ENCODE measurements at regions of chr5 and their contacts with region 1.

Region 1: GRCh38 chr5:77086689-77087483 is at the start of gene ZBED3:
- DNase-seq: peak; percentile 45 to 94 (median 68)

Region 2: DNA sequence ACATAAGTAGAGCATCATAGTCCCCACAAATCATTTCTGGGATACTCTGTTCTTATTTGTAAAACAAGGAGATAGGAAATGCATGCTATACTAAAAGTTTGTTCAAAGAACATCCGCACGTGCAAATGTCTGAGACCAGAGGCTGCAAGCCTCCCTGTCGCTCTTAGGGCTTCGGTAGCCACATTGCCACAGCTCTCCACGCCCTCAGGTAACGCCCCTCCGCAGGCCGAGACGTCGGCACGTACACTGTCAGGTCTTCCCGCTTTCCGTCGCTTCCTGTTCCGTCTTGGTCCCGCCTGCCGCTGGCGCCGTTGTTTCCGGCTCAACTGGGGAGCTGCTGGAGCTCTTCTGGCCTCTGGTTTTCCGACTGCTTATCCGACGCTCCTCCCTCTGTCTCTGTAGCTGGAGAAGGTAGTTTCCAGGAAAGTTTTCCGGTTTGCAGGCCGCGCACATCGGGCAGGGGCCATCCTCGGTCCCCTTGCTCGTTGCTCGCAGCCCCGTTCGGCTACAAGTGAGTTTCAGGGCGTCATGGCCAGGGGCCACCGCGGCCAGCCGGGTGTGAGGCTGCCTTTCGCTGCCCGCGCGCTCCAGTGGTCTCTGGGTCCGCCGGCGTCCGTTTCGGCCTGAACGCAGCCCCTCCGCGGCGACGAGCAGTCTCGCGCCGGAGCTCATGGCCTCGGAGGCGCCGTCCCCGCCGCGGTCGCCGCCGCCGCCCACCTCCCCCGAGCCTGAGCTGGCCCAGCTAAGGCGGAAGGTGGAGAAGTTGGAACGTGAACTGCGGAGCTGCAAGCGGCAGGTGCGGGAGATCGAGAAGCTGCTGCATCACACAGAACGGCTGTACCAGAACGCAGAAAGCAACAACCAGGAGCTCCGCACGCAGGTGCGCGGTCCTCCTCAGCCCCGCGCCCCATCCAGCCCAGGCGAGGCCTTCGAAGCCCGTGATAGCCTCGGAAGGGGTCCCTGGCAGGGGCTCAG is 56.5 kb before region 1 on chr5 and contains the start of gene AGGF1:
- intact Hi-C with region 1: loop called (anchors 5 kb)
- DNase-seq: peak; percentile 88 to 99 (median 94)

Region 3: DNA sequence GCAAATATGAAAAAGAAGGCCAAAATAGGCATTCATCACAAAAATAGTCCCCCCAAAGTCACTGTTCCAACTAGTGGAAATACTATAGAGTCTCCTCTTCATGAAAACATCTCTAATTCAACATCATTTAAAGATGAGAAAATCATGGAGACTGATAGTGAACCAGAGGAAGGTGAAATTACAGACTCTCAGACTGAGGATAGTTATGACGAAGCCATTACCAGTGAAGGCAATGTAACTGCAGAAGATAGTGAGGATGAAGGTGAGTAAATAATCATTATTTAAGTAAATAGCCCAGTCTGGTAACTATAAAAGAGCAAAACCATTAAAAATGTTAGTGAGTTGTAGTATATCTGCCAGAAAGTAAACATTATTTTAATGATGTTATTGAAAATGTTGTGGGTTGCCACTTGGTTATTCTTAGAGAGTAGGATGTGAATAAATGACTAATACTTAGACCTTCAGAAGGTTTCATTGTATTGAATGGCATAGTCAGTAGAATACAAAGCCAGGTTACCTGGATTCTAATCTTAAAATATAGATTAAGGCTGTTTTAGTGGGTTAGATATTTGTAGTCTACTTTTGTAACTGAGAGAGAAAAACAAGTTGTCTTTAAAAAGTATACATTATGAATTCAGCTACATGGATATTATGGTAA is 40.3 kb before region 1 on chr5:
- intact Hi-C with region 1: no loop called
- DNase-seq: no peak

Region 4: DNA sequence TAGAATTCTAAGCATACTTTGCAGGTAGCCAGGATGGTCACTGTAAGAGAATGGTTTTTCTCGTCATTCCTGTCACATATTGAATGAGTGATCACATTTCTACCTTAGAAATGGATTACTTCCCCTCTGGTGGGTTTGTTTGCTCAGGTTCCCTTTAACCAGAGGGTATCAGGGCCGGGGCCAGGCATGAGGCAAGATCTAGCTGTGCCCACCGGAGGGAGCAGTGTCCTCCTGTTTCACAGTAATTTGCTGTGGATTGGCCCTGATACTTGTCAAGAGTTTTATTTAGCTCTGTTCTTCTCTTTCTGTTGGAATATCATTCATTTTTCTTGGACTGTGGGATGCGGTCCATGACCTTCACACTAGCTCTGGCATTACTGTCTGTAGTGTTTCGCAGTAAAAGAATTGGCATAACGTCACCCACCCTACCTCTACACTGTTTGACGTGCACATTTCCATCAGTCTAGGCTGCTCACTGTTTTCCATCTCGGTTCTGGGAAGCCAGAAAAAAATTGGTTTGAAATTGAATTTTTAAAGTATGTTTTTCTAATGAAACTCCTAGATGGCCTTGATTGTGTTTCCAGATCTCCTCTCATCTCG is 42.6 kb after region 1 on chr5:
- intact Hi-C with region 1: loop called (anchors 5 kb)
- DNase-seq: peak in 9 of 10 donors; percentile 29 to 91 (median 35)

Region 5: DNA sequence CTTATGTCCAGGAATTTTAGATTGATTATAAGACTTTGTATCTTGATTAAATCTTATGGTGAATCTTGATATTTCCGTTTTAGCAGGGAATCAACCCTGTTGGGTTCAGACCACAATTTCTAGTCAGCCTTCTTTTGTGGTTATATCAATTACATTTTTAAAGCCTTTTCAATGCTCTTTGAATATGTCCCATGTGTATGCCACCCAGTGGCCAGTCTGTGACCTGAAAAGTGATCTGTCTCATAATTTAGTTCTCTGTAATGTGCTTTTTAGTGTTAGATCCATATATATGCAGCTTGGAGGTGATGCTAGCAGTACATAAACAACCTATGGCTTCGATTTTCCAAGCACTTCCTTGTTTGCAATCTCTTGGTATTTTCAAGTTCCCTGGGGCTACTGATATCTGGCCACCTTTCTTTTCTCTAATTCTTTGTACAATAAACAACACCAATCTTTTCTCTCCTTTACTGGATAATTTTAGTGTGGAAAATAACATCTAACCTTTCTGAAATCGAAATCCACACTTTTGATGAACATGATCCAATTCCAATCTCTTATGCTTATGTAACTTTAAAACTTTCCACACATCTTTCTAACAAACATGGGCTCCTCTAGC is 152.3 kb after region 1 on chr5:
- intact Hi-C with region 1: loop called (anchors 10 kb)
- DNase-seq: peak in 1 of 10 donors; percentile 32

Region 6: GRCh38 chr5:77491783-77492652 is 405.1 kb after region 1 on chr5 and contains the start of gene WDR41:
- intact Hi-C with region 1: loop called (anchors 5 kb)
- DNase-seq: peak; percentile 78 to 98 (median 84)